GM12878 (cell line): ENCODE measurements at regions of chr22 and their contacts with region 1.

Region 1: GRCh38 chr22:45968751-45969413 is 8.1 kb downstream of the WNT7B start:
- DNase-seq: no peak
- ATAC-seq: no peak
- H3K4me3 ChIP-seq: no peak overlapping the region
- H3K27ac ChIP-seq: no peak overlapping the region
- H3K4me1 ChIP-seq: no peaks in the 10 kb centered on the region
- H3K27me3 ChIP-seq: peaks cover 5 to 20% of the 10 kb centered on the region in 2 experiments; a peak in 3 of 4 replicates
- CTCF ChIP-seq: no peak
- EP300 ChIP-seq: no peak
- POLR2A ChIP-seq: no peak
- RAD21 ChIP-seq: no peak

Region 2: DNA sequence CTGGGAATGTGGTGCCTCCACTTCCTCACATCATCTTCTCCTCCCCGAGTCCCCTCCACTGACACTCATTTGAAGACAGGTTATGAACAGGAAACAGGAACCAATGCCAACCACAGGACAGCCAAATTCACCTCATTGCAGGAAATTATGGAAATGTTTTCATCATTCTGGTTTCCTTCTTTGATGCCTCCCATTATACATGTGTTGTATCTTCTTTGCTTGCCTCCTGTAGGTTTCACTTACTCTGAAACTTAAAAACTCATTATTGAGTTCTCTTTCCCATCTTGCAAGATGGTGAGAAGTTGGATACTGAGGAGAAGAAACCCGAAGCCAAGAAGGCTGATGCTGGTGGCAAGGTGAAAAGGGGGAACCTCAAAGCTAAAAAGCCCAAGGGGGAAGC is 1067.6 kb before region 1 on chr22:
- CTCF ChIA-PET with region 1: no interaction called
- POLR2A ChIA-PET with region 1: no interaction called
- RAD21 ChIA-PET with region 1: no interaction called
- SMC1A ChIA-PET with region 1: no interaction called
- in situ Hi-C with region 1: loop called (anchors 25 kb)
- intact Hi-C with region 1: no loop called
- DNase-seq: no peak
- ATAC-seq: no peak
- H3K4me3 ChIP-seq: no peak overlapping the region
- H3K27ac ChIP-seq: no peak overlapping the region
- H3K4me1 ChIP-seq: no peaks in the 10 kb centered on the region
- H3K27me3 ChIP-seq: no peaks in the 10 kb centered on the region; a peak in 1 of 4 replicates
- CTCF ChIP-seq: no peak
- EP300 ChIP-seq: no peak
- POLR2A ChIP-seq: no peak
- RAD21 ChIP-seq: no peak

Region 3: GRCh38 chr22:45640291-45640940 is 328.5 kb before region 1 on chr22:
- CTCF ChIA-PET with region 1: no interaction called
- POLR2A ChIA-PET with region 1: no interaction called
- RAD21 ChIA-PET with region 1: no interaction called
- SMC1A ChIA-PET with region 1: no interaction called
- in situ Hi-C with region 1: loop called (anchors 5 kb)
- intact Hi-C with region 1: no loop called
- DNase-seq: no peak
- ATAC-seq: no peak
- H3K4me3 ChIP-seq: no peak overlapping the region
- H3K27ac ChIP-seq: no peak overlapping the region
- H3K4me1 ChIP-seq: peaks cover 5% of the 10 kb centered on the region; the same call in 1 of the 2 replicates
- H3K27me3 ChIP-seq: peaks cover 2 to 3% of the 10 kb centered on the region in 2 experiments; a peak in 2 of 4 replicates
- CTCF ChIP-seq: no peak
- EP300 ChIP-seq: no peak
- POLR2A ChIP-seq: no peak
- RAD21 ChIP-seq: no peak

Region 4: DNA sequence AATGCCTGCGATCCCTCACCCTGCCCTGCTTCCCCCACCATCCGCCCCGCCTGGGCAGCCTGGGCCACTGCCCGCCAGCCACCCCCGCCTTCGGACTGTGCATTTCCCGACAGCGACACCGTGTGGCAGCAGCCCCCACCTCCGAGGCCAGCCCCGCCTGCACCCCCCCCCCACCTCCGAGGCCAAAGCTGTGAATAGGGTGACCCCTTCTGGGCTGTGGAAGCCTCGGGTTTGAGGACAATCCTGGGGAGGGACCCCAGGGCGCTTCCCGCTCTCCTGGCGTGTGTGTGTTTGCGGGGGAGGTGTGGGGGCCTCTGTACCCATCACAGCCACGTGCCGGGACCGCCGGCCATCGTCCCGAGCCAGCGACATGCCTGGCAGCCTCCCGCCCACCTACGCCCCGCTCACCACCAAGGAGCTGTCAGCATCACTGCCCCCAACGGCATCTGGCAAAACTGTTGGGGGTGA is 147.6 kb after region 1 on chr22:
- CTCF ChIA-PET with region 1: no interaction called
- POLR2A ChIA-PET with region 1: no interaction called
- RAD21 ChIA-PET with region 1: no interaction called
- SMC1A ChIA-PET with region 1: no interaction called
- in situ Hi-C with region 1: no loop called
- intact Hi-C with region 1: no loop called
- DNase-seq: peak; percentile 16
- ATAC-seq: peak; percentile 97
- H3K4me3 ChIP-seq: no peak overlapping the region
- H3K27ac ChIP-seq: no peak overlapping the region
- H3K4me1 ChIP-seq: no peaks in the 10 kb centered on the region
- H3K27me3 ChIP-seq: no peaks in the 10 kb centered on the region; a peak in 1 of 4 replicates
- CTCF ChIP-seq: peak; percentile 90 to 98 (median 94)
- EP300 ChIP-seq: no peak
- POLR2A ChIP-seq: no peak
- RAD21 ChIP-seq: peak; percentile 98